ENCODE measurements at regions of chr1 and their contacts with region 1.

Region 1: GRCh38 chr1:150561974-150562445 is 12.8 kb downstream of the ADAMTSL4 start:
- DNase-seq: peak; percentile 82 to 95 (median 88)
- ATAC-seq: peak; percentile 83
- H3K4me3 ChIP-seq: peak overlapping the region; percentile 26
- H3K27ac ChIP-seq: peak overlapping the region; percentile 81
- H3K4me1 ChIP-seq: peaks cover 39 to 69% of the 10 kb centered on the region in 2 experiments
- H3K27me3 ChIP-seq: no peaks in the 10 kb centered on the region
- CTCF ChIP-seq: no peak
- EP300 ChIP-seq: 0 out of 2 replicates have a peak, but pooled peaks have one; percentile 35
- POLR2A ChIP-seq: peak; percentile 32; the same call in 1 of the 2 replicates
- RAD21 ChIP-seq: no peak

Region 2: GRCh38 chr1:150486964-150487762 is 74.8 kb before region 1 on chr1 and contains the start of gene TARS2:
- CTCF ChIA-PET with region 1: interaction called, 4 read pairs
- POLR2A ChIA-PET with region 1: interaction called, 5 read pairs
- in situ Hi-C with region 1: no loop called
- intact Hi-C with region 1: loop called (anchors 1 kb)
- DNase-seq: peak; percentile 97 to 98 (median 98)
- ATAC-seq: peak; percentile 100
- H3K4me3 ChIP-seq: peak within 1 kb of the TSS; percentile 74
- H3K27ac ChIP-seq: peak within 1 kb of the TSS; percentile 93
- H3K4me1 ChIP-seq: peaks cover 3 to 10% of the 10 kb centered on the region in 2 experiments; a peak in 3 of 5 replicates
- H3K27me3 ChIP-seq: no peaks in the 10 kb centered on the region
- CTCF ChIP-seq: no peak; a peak in 1 of 6 replicates
- EP300 ChIP-seq: peak; percentile 61
- POLR2A ChIP-seq: peak; percentile 95
- RAD21 ChIP-seq: peak in 1 of 2 experiments; percentile 32; a peak in 1 of 4 replicates
- polyA plus RNA-seq, gene TARS2: 17.0 to 30.1 TPM

Region 3: GRCh38 chr1:150578965-150579798 is 17.2 kb after region 1 on chr1 and contains the start of gene MCL1:
- CTCF ChIA-PET with region 1: no interaction called
- POLR2A ChIA-PET with region 1: interaction called, 148 read pairs
- in situ Hi-C with region 1: no loop called
- intact Hi-C with region 1: no loop called
- DNase-seq: peak; percentile 87 to 97 (median 91)
- ATAC-seq: peak; percentile 92
- H3K4me3 ChIP-seq: peak within 1 kb of the TSS; percentile 98
- H3K27ac ChIP-seq: peak within 1 kb of the TSS; percentile 87
- H3K4me1 ChIP-seq: peaks cover 10 to 19% of the 10 kb centered on the region in 2 experiments; a peak in 4 of 5 replicates
- H3K27me3 ChIP-seq: no peaks in the 10 kb centered on the region
- CTCF ChIP-seq: peak in 2 of 3 experiments; percentile 17 to 31; a peak in 3 of 6 replicates
- EP300 ChIP-seq: peak; percentile 69; the same call in 1 of the 2 replicates
- POLR2A ChIP-seq: peak; percentile 99
- RAD21 ChIP-seq: no peak
- polyA plus RNA-seq, gene MCL1: 27.1 to 31.0 TPM

Region 4: DNA sequence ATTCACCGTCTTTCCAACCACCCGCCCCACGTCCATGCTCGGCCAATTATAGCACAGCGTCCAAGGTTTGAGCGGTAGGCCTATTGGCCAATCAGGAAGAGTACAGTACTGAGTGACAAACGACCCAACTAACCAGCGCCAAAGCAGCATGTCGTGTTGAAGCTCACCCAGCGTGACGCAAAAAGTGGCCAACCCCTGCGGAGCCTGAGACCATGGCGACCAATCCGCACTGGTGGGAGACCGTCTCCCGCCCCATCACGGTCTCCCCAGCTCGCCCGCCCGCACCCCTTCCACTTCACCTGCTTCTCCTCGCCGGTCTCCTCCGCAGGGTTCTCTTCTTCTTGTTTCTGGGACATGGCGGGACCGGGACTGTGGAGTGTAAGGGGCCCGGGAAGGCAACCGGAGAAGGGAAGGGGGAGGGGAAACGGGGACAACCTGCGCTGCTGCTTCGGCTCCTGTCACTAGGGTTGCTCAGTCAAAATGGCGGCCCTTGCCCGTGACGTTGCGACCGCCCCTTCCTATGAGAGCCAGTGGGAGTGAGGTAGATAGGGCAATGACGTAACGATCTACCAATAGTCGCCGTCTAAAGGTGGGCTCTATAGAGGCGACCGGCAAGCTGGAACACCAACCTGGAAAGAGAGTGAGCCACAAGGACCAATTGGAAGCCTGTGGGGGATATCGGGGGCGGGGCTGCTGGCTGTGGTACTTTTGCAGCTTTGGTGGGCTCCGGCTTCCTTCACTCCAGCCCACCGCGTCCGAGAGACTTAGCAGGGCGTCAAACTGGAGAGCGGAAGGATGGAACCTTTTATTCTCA is 67.3 kb after region 1 on chr1 and contains the start of gene ENSA:
- CTCF ChIA-PET with region 1: no interaction called
- POLR2A ChIA-PET with region 1: interaction called, 11 read pairs
- in situ Hi-C with region 1: no loop called
- intact Hi-C with region 1: no loop called
- DNase-seq: peak; percentile 89 to 99 (median 94)
- ATAC-seq: peak; percentile 94
- H3K4me3 ChIP-seq: peak within 1 kb of the TSS; percentile 59
- H3K27ac ChIP-seq: peak within 1 kb of the TSS; percentile 92
- H3K4me1 ChIP-seq: peaks cover 14 to 24% of the 10 kb centered on the region in 2 experiments; a peak in 4 of 5 replicates
- H3K27me3 ChIP-seq: no peaks in the 10 kb centered on the region
- CTCF ChIP-seq: no peak
- EP300 ChIP-seq: peak; percentile 3; the same call in 1 of the 2 replicates
- POLR2A ChIP-seq: peak; percentile 97
- RAD21 ChIP-seq: no peak
- polyA plus RNA-seq, gene ENSA: 68.1 to 93.9 TPM

Region 5: DNA sequence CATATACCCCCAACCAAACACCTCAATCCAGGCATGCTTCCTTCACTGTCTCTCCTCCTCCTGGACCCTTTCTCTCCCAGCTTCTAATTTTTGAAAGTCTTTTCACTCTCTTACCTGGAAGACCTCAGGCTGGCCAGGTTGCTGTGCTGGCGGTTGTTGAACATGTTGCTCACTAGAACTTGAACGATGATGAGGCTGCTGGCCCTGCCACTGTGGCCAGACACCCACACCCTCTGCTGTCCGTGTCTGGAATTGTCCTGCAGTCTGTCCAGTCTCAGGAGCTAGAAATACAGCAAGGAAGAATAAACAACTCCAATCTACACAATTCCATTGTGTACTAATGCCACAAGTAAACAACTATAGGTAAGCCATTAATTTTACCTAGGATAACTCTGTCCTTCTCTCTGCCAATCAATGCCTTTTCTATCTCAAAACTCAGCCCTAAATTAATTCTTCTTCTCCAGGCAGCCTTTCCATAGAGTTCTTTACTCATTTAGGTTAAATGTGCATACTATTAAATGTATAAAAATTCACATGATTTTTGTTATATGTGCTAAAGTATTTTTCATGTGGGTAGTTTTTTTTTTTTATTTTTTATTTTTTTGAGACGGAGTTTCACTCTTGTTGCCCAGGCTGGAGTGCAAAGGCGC is 251.2 kb after region 1 on chr1:
- CTCF ChIA-PET with region 1: interaction called, 13 read pairs
- POLR2A ChIA-PET with region 1: interaction called, 5 read pairs
- in situ Hi-C with region 1: no loop called
- intact Hi-C with region 1: loop called (anchors 1 kb)
- DNase-seq: peak; percentile 37 to 78 (median 57)
- ATAC-seq: peak; percentile 98
- H3K4me3 ChIP-seq: no peak overlapping the region
- H3K27ac ChIP-seq: no peak overlapping the region
- H3K4me1 ChIP-seq: peaks cover 0 to 8% of the 10 kb centered on the region in 2 experiments; a peak in 1 of 5 replicates
- H3K27me3 ChIP-seq: no peaks in the 10 kb centered on the region
- CTCF ChIP-seq: peak; percentile 86 to 92 (median 90)
- EP300 ChIP-seq: no peak
- POLR2A ChIP-seq: no peak
- RAD21 ChIP-seq: peak; percentile 85 to 95

Region 6: GRCh38 chr1:150995896-150996295 is 433.9 kb after region 1 on chr1:
- CTCF ChIA-PET with region 1: interaction called, 9 read pairs
- POLR2A ChIA-PET with region 1: interaction called, 3 read pairs
- in situ Hi-C with region 1: loop called (anchors 10 kb)
- intact Hi-C with region 1: loop called (anchors 5 kb)
- DNase-seq: peak in 3 of 4 experiments; percentile 38 to 55 (median 39)
- ATAC-seq: peak; percentile 34; the same call in 1 of the 3 replicates
- H3K4me3 ChIP-seq: no peak overlapping the region
- H3K27ac ChIP-seq: no peak overlapping the region
- H3K4me1 ChIP-seq: peaks cover 27 to 33% of the 10 kb centered on the region in 2 experiments
- H3K27me3 ChIP-seq: no peaks in the 10 kb centered on the region
- CTCF ChIP-seq: peak; percentile 56 to 76 (median 73); a peak in 5 of 6 replicates
- EP300 ChIP-seq: no peak
- POLR2A ChIP-seq: no peak
- RAD21 ChIP-seq: peak; percentile 64 to 70